K562 (cell line): ENCODE measurements at regions of chr2 and their contacts with region 1.

Region 1: DNA sequence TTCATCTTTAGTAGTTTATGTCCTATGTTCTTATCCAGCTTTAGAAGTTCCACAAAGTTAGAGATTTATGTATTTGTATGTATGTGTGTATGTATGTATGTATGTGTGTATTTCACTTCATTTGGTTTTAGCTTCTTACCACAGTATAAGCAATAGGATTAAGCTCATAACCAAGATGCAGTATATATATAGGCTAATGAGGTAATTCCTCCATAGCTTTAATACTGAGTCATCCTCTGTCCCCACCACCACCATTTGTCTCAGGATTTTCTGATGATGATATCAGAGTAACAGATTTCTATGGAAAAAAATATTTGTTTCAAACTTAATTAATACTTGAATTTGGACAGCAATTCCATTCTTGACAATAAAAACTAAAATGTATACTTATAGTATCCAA is 159.2 kb downstream of the SOX11 start:
- DNase-seq: no peak
- ATAC-seq: no peak
- H3K4me3 ChIP-seq: no peak overlapping the region
- H3K27ac ChIP-seq: no peak overlapping the region
- H3K4me1 ChIP-seq: no peaks in the 10 kb centered on the region
- H3K27me3 ChIP-seq: no peaks in the 10 kb centered on the region
- CTCF ChIP-seq: no peak
- EP300 ChIP-seq: no peak
- POLR2A ChIP-seq: no peak
- RAD21 ChIP-seq: no peak

Region 2: DNA sequence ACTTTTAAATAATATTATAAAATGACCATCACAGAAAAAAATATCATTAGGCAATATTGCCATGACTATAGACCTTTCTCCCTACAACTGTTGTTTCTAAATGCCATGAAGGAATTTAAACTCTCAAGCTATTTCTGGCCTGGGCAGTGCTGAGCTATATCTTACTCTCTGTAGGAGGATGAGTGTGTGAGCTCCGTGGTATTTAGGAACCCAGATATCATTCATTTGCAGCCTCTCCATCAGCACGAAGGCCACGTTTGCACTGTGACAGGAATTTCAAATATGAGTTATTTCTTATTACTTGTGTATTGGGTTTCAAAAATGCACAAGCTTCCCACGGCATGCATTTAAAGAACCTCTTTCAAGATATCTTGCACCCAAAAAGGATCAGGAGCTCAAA is 194.2 kb before region 1 on chr2:
- CTCF ChIA-PET with region 1: no interaction called
- POLR2A ChIA-PET with region 1: no interaction called
- in situ Hi-C with region 1: no loop called
- intact Hi-C with region 1: no loop called
- DNase-seq: no peak
- ATAC-seq: no peak
- H3K4me3 ChIP-seq: no peak overlapping the region
- H3K27ac ChIP-seq: no peak overlapping the region
- H3K4me1 ChIP-seq: no peaks in the 10 kb centered on the region
- H3K27me3 ChIP-seq: no peaks in the 10 kb centered on the region
- CTCF ChIP-seq: no peak
- EP300 ChIP-seq: no peak
- POLR2A ChIP-seq: no peak
- RAD21 ChIP-seq: no peak

Region 3: GRCh38 chr2:6011921-6012320 is 160.5 kb after region 1 on chr2:
- CTCF ChIA-PET with region 1: no interaction called
- POLR2A ChIA-PET with region 1: no interaction called
- in situ Hi-C with region 1: no loop called
- intact Hi-C with region 1: loop called (anchors 5 kb)
- DNase-seq: no peak
- ATAC-seq: no peak
- H3K4me3 ChIP-seq: no peak overlapping the region
- H3K27ac ChIP-seq: no peak overlapping the region
- H3K4me1 ChIP-seq: no peaks in the 10 kb centered on the region
- H3K27me3 ChIP-seq: no peaks in the 10 kb centered on the region
- CTCF ChIP-seq: no peak
- EP300 ChIP-seq: no peak
- POLR2A ChIP-seq: no peak
- RAD21 ChIP-seq: no peak